Transverse colon (tissue), 4 donors: ENCODE measurements at regions of chr15 and their contacts with region 1.

Region 1: DNA sequence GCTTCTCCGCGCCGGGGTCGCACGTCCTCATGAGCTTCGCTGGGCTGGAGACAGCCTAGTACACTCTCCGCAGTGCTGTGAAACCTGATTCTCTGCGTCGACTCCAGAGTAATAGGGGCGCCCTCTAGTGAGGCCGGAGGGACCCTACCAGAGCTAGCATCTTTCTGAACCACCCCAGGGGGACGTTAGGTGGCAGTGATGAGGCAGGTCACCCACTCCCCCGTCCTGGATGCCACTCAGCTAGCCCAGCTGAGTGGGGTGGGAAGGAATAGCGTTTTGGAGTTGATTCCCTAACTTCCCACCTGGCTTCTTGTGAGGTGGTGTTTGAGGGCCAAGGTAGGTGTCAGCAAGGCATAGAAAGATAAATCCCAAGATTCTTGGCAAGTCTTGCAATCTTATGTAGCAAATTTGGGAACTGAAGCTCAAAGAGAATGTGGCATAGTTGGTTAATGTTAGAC is 4.0 kb downstream of the DUOXA2 start:
- DNase-seq: peak; percentile 89
- H3K4me3 ChIP-seq: peak overlapping the region in 1 of 4 donors; percentile 27
- H3K27ac ChIP-seq: no peak overlapping the region
- H3K4me1 ChIP-seq: peaks cover 10 to 26% (median 18%) of the 10 kb centered on the region in 4 donors
- H3K27me3 ChIP-seq: peaks cover 78% of the 10 kb centered on the region
- CTCF ChIP-seq: peak; percentile 90 to 95 (median 92)
- EP300 ChIP-seq: no peak
- POLR2A ChIP-seq: no peak

Region 2: DNA sequence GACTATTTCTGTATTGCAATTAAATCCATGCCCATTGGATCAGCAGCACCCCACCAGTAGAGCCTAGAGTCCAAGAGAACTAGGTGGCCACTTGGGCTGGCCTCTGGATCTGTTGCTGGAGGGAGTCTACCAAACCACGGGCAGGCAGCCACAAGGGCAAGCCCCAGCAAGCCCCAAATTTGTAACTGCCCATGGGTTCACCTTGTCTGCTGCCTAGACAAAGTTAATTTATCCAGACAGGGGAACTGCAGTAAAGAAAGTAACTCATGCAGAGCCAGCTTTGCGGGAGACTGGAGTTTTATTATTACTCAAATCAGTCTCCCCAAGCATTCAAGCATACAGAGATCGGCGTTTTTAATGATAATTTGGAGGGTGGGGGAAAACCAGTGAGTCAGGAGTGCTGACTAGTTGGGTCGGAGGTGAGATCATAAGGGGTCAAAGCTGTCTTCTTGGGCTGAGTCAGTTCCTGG is 235.6 kb before region 1 on chr15:
- in situ Hi-C with region 1: no loop called
- intact Hi-C with region 1: no loop called
- DNase-seq: no peak
- H3K4me3 ChIP-seq: no peak overlapping the region
- H3K27ac ChIP-seq: no peak overlapping the region
- H3K4me1 ChIP-seq: no peaks in the 10 kb centered on the region
- H3K27me3 ChIP-seq: no peaks in the 10 kb centered on the region
- CTCF ChIP-seq: no peak
- EP300 ChIP-seq: no peak
- POLR2A ChIP-seq: no peak

Region 3: GRCh38 chr15:45162771-45163526 is 44.8 kb after region 1 on chr15:
- in situ Hi-C with region 1: no loop called
- intact Hi-C with region 1: no loop called
- DNase-seq: peak; percentile 80
- H3K4me3 ChIP-seq: no peak overlapping the region
- H3K27ac ChIP-seq: no peak overlapping the region
- H3K4me1 ChIP-seq: peaks cover 10 to 21% (median 12%) of the 10 kb centered on the region in 4 donors
- H3K27me3 ChIP-seq: no peaks in the 10 kb centered on the region
- CTCF ChIP-seq: peak; percentile 77 to 88 (median 79)
- EP300 ChIP-seq: no peak
- POLR2A ChIP-seq: no peak

Region 4: DNA sequence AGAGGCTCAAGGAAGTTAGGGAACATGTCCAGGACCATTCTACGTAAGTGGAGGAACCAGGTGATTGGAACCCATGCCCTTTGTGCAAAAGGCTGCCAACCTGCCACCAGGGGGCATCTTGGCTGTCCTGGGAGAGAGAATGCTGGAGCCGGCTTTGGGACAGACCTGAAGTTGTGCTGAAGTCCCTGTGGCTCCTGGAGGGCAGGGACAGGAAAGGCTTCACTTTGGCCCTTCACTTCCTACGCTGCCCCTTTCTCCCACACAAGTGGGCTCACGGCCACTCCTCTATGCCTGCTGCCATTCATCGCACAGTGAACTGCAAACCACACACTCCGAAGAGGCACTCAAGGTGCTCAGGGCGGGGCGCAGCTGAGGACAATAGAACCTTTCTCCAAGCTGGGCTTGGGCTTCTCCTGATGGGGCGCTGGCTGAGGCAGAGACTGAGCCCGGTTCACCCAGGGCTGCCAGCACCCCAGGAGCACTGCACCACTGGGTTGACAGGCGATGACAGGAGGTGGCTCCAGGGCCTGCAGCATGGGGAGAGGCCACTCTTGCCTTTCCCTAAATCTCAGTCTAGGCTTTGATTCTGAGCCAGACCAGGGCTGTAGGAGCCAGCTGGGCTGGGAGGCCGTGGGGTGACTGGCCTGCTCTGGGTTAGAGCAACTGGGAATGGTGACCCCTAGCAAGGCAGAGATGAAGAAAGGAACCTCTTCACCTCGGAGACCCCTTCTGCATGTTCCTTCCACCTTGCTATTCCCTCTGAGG is 61.2 kb after region 1 on chr15:
- in situ Hi-C with region 1: no loop called
- intact Hi-C with region 1: loop called (anchors 2 kb)
- DNase-seq: peak; percentile 69
- H3K4me3 ChIP-seq: no peak overlapping the region
- H3K27ac ChIP-seq: peak overlapping the region in 2 of 4 donors; percentile 4 to 19
- H3K4me1 ChIP-seq: peaks cover 0 to 13% (median 5%) of the 10 kb centered on the region in 4 donors
- H3K27me3 ChIP-seq: no peaks in the 10 kb centered on the region
- CTCF ChIP-seq: peak; percentile 52 to 70 (median 61)
- EP300 ChIP-seq: no peak
- POLR2A ChIP-seq: no peak